ENCODE measurements at regions of chr3 and their contacts with region 1.

Region 1: DNA sequence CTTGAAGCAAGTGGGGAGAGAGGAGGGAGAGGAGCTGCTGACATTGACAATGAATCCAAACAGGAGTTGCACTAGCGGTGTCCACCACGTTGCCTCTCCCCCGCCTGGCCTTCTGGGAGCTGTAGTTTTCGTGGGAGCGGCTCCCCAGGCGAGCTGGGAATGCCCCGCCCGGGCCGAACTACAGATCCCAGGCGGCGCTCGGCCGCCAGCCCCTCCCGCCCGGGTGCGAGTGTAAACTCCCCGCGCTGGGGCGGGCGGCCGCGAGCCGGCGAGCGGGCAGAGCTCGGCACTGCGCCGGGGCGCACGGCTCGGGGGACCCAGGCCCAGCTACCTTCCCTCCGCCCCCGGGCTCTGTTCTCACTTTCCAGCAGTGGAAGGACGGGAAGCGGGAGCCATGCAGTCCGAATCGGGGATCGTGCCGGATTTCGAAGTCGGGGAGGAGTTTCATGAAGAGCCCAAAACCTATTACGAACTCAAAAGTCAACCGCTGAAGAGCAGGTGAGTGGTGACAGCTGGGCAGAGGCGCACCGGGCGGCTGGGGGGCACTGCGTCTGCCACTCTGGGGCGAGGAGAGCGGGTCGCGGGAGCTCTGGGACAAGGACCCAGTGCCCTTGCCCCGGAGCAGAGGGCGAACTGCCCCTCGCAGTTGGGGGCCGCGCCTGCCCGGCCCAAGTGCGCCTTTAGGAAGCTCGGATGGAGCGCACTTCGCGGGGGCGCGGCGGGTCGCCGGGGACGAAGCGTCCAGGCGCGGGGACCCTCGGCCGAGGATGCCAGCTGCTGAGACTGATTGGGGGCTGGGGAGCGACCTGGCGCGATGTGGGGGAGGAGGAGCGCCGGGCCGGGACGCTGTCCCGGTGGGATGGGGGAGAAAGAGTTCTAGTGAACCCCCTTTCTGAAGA is at the start of gene MITF:
- DNase-seq: peak; percentile 95 to 96
- ATAC-seq: peak; percentile 75 to 78
- H3K4me3 ChIP-seq: peak within 1 kb of the TSS; percentile 76 to 98 (median 88)
- H3K27ac ChIP-seq: peak within 1 kb of the TSS; percentile 91 to 97 (median 92)
- H3K4me1 ChIP-seq: peaks cover 60 to 64% of the 10 kb centered on the region in 2 donors
- H3K27me3 ChIP-seq: no peaks in the 10 kb centered on the region
- CTCF ChIP-seq: peak in 1 of 5 experiments; percentile 8
- POLR2A ChIP-seq: peak; percentile 99
- total RNA-seq, gene MITF: 71.1 to 139 (median 109) TPM

Region 2: GRCh38 chr3:69719587-69720122 is 19.8 kb before region 1 on chr3:
- in situ Hi-C with region 1: no loop called
- intact Hi-C with region 1: loop called (anchors 2 kb)
- DNase-seq: peak; percentile 35 to 49
- ATAC-seq: peak; percentile 96 to 98
- H3K4me3 ChIP-seq: no peak overlapping the region
- H3K27ac ChIP-seq: peak overlapping the region; percentile 80 to 89 (median 86)
- H3K4me1 ChIP-seq: peaks cover 27 to 30% of the 10 kb centered on the region in 2 donors
- H3K27me3 ChIP-seq: no peaks in the 10 kb centered on the region
- CTCF ChIP-seq: peak in 1 of 5 experiments; percentile 3
- POLR2A ChIP-seq: no peak

Region 3: DNA sequence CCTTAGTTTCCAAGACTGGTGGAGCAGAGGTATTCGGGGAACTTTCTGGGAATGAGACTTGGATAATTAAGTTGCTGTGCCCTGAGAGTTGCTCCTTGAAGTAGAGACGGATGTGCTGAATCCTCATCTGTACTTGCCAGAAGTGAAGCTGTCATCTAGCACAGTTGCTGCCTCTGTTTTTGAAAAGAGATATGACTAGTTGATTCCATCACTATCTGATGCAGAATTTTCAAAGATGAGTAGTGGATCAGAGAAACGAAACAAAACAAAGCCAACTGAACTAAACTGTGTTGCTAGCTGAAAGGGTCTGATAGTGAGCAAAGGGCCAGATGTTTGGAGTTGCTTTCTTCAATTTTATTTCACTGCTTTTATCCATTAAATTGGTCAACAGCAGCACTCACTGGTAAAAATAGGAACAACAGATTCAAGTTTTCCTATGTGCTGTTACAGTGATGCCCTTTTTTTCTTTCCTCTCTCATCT is 52.5 kb after region 1 on chr3:
- in situ Hi-C with region 1: no loop called
- intact Hi-C with region 1: loop called (anchors 2 kb)
- DNase-seq: no peak
- ATAC-seq: peak; percentile 53 to 57
- H3K4me3 ChIP-seq: peak overlapping the region in 1 of 4 donors; percentile 22
- H3K27ac ChIP-seq: peak overlapping the region; percentile 58 to 73 (median 64)
- H3K4me1 ChIP-seq: peaks cover 45 to 59% of the 10 kb centered on the region in 2 donors
- H3K27me3 ChIP-seq: no peaks in the 10 kb centered on the region
- CTCF ChIP-seq: peak in 4 of 5 experiments; percentile 26 to 50 (median 42)
- POLR2A ChIP-seq: no peak

Region 4: DNA sequence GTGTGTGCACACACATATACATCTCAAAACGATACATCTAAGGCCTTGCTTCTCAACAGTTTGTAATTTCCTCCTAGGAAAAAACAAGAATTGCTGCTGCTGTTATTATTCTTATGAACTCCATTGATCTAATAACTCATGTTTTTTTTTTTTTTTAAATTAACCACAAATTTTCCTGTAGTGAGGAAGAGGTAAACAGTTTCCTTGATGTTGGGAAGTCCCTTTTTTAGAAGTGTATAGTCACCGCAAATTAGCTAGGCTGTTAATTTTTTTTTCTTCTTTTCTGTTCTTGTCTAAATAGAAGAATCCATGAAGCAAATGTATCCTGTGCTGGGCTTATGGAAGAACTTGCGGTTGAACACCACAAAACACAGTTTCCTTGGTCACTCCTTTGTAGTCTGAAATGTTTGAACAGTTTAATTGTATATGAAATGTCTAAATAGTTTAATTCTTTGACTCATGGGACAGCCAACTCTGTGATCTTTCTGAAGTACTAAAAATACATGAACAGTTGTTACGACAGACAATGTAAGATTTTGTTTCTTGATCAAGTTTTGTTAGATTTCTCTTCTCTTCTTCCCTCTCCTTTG is 64.3 kb after region 1 on chr3:
- in situ Hi-C with region 1: no loop called
- intact Hi-C with region 1: no loop called
- DNase-seq: no peak
- ATAC-seq: no peak
- H3K4me3 ChIP-seq: no peak overlapping the region
- H3K27ac ChIP-seq: no peak overlapping the region
- H3K4me1 ChIP-seq: peaks cover 15 to 18% of the 10 kb centered on the region in 2 donors
- H3K27me3 ChIP-seq: no peaks in the 10 kb centered on the region
- CTCF ChIP-seq: no peak
- POLR2A ChIP-seq: no peak

Measured in gastrocnemius medialis (tissue), 4 donors.